Activated T-helper 2 cell treated with anti-CD3 and anti-CD28 coated beads, Interferon-gamma antibody, Interleukin-2, Interleukin-4, amounts not matched to agents 10 μg/mL and 5 μg/mL and 100 μg/mL, durations not matched to agents 14 hours and 24 hours and 36 hours (primary cell): ENCODE measurements at regions of chr4 and their contacts with region 1.

Region 1: GRCh38 chr4:10157478-10158332 is 41.1 kb upstream of the WDR1 start:
- DNase-seq: peak; percentile 16
- H3K4me3 Mint-ChIP-seq: no peak overlapping the region
- H3K27ac Mint-ChIP-seq: no peak overlapping the region
- H3K4me1 Mint-ChIP-seq: peaks cover 23% of the 10 kb centered on the region
- H3K27me3 Mint-ChIP-seq: peaks cover 5% of the 10 kb centered on the region

Region 2: DNA sequence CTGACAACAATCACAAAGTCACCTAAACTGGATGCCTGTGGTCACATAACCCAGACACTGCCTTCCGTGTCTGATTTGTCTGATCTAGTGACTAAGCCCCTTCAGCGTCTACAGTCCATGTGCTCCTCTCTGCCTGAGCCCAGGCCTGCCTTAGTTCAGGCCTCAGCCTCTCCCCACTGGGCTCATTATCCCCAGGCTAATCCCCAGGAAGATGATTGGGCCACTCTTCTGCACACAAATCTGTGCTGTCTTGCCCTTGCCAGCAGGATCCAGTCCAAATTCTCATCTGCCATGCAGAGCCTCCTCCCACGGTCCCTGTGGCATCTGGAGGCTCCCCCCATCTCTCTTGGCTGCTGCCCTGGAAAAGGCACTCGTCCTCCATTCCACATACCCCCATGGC is 233.0 kb before region 1 on chr4:
- intact Hi-C with region 1: no loop called
- DNase-seq: no peak
- H3K4me3 Mint-ChIP-seq: no peak overlapping the region
- H3K27ac Mint-ChIP-seq: no peak overlapping the region
- H3K4me1 Mint-ChIP-seq: no peaks in the 10 kb centered on the region
- H3K27me3 Mint-ChIP-seq: peaks cover 2% of the 10 kb centered on the region

Region 3: GRCh38 chr4:10403633-10404445 is 246.1 kb after region 1 on chr4:
- intact Hi-C with region 1: loop called (anchors 2 kb)
- DNase-seq: no peak
- H3K4me3 Mint-ChIP-seq: no peak overlapping the region
- H3K27ac Mint-ChIP-seq: no peak overlapping the region
- H3K4me1 Mint-ChIP-seq: no peaks in the 10 kb centered on the region
- H3K27me3 Mint-ChIP-seq: no peaks in the 10 kb centered on the region

Region 4: GRCh38 chr4:10535912-10536311 is 378.2 kb after region 1 on chr4:
- intact Hi-C with region 1: loop called (anchors 2 kb)
- DNase-seq: no peak
- H3K4me3 Mint-ChIP-seq: no peak overlapping the region
- H3K27ac Mint-ChIP-seq: no peak overlapping the region
- H3K4me1 Mint-ChIP-seq: no peaks in the 10 kb centered on the region
- H3K27me3 Mint-ChIP-seq: peaks cover 9% of the 10 kb centered on the region